ENCODE measurements at regions of chr16 and their contacts with region 1.

Region 1: DNA sequence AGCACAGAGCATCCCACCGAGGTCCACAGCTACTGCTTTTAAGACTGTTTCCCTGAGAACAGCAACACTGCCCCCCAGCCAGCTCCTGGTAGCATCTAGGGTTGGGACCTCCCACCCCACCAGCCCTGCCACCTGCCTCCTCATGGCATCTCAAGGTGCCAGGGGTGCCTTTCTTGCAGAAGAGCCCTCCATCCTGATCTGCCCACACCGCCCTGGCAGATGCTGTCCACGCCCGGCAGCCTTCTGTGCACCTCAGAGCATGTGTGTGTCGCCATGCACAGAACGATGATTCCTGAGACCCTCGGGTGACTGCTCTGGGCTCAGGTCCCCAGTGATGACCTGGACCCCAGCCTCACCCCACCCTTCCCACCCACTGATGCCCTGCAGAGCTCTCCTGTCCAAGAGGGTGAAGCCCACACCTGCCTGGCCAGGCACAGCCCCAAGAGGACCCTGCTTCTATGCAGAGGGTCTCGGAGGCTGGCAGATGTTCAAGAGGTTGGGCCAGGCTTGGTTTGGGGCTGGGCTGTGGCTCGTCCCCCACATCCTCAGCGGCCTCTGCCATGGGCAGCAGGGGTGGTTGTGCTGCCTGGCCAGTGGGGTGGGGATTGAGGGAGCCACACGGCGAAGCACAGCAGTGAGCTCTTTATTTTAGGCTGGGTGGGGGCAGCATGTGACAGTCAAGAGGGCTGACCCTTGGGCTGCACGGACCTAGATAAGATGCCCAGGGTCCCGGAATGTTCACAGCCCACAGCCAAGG is 5.2 kb upstream of the SPATA2L start:
- DNase-seq: no peak
- H3K4me3 Mint-ChIP-seq: no peak overlapping the region
- H3K27ac Mint-ChIP-seq: no peak overlapping the region
- H3K4me1 Mint-ChIP-seq: peaks cover 9% of the 10 kb centered on the region
- H3K27me3 Mint-ChIP-seq: no peaks in the 10 kb centered on the region

Region 2: GRCh38 chr16:89737341-89738071 is 30.8 kb after region 1 on chr16:
- CTCF ChIA-PET with region 1: interaction called, 11 read pairs
- POLR2A ChIA-PET with region 1: no interaction called
- intact Hi-C with region 1: loop called (anchors 5 kb)
- DNase-seq: peak; percentile 65
- H3K4me3 Mint-ChIP-seq: peak overlapping the region; percentile 32
- H3K27ac Mint-ChIP-seq: peak overlapping the region; percentile 45
- H3K4me1 Mint-ChIP-seq: peaks cover 20% of the 10 kb centered on the region
- H3K27me3 Mint-ChIP-seq: no peaks in the 10 kb centered on the region

Region 3: GRCh38 chr16:89764711-89765201 is 58.1 kb after region 1 on chr16:
- CTCF ChIA-PET with region 1: interaction called, 13 read pairs
- POLR2A ChIA-PET with region 1: no interaction called
- intact Hi-C with region 1: no loop called
- DNase-seq: peak; percentile 72
- H3K4me3 Mint-ChIP-seq: peak overlapping the region; percentile 48
- H3K27ac Mint-ChIP-seq: peak overlapping the region; percentile 61
- H3K4me1 Mint-ChIP-seq: peaks cover 46% of the 10 kb centered on the region
- H3K27me3 Mint-ChIP-seq: no peaks in the 10 kb centered on the region

Region 4: GRCh38 chr16:89791278-89791995 is 84.8 kb after region 1 on chr16:
- CTCF ChIA-PET with region 1: interaction called, 96 read pairs
- POLR2A ChIA-PET with region 1: no interaction called
- intact Hi-C with region 1: loop called (anchors 1 kb)
- DNase-seq: no peak
- H3K4me3 Mint-ChIP-seq: no peak overlapping the region
- H3K27ac Mint-ChIP-seq: no peak overlapping the region
- H3K4me1 Mint-ChIP-seq: peaks cover 6% of the 10 kb centered on the region
- H3K27me3 Mint-ChIP-seq: no peaks in the 10 kb centered on the region

Region 5: DNA sequence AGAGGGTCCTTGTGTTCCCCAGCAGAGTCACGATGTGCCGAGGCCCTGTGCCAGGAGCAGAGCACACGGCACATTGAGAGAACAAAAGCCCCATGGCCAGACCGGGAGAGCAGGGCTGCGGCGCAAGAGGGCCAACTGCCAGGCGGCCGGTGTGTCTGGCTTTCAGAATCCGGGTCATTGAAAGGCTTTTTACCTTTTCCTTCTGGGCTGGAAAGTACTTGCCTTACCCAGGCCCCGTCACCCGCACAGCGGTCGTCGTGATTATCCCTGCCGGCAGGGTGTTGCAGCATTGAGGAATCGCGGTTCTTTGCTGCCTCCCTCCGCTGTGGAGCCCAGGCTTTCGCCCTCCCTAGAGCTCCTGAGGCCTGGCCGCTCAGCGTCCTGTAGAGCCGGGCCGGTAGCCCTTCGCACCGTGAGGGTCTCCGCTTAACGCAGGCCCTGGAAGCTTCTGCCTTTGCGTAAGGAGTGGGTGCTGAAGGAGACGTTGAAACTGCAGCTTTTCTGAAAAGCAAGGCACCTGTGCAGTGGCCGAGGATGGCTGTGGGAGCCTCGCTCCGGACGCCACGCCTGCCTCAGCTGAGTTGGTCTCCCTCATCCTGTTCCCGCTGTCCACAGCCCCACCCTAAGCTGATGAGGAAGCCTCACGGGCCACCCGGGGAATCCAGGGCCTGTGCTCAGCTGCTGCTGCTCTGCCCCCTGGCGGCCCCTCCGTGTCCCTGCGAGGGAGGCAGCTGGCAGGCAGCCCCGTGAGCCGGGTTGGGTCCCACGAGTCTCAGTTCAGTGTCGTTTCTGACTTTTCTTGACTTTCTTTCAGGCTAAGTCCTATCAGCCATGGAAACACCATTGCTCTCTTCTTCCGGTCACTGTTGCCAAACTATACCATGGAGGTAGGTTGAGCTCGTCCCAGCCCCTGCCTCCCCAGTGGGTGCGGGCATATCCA is 203.4 kb after region 1 on chr16:
- CTCF ChIA-PET with region 1: interaction called, 21 read pairs
- POLR2A ChIA-PET with region 1: no interaction called
- intact Hi-C with region 1: loop called (anchors 5 kb)
- DNase-seq: peak; percentile 76
- H3K4me3 Mint-ChIP-seq: no peak overlapping the region
- H3K27ac Mint-ChIP-seq: no peak overlapping the region
- H3K4me1 Mint-ChIP-seq: no peaks in the 10 kb centered on the region
- H3K27me3 Mint-ChIP-seq: no peaks in the 10 kb centered on the region

Measured in activated CD4-positive, alpha-beta memory T cell treated with anti-CD3 and anti-CD28 coated beads for 36 hours (primary cell).